GM10248 (cell line): ENCODE measurements at regions of chr17 and their contacts with region 1.

Region 1: GRCh38 chr17:48024937-48025906 is 12.4 kb downstream of the COPZ2 start:
- DNase-seq: peak; percentile 96
- CTCF ChIP-seq: peak; percentile 84

Region 2: GRCh38 chr17:47831934-47832327 is 193.3 kb before region 1 on chr17:
- CTCF ChIA-PET with region 1: no interaction called
- POLR2A ChIA-PET with region 1: no interaction called
- DNase-seq: no peak
- CTCF ChIP-seq: no peak

Region 3: GRCh38 chr17:47949136-47949759 is 76.0 kb before region 1 on chr17:
- CTCF ChIA-PET with region 1: interaction called, 99 read pairs
- POLR2A ChIA-PET with region 1: no interaction called
- DNase-seq: peak; percentile 82
- CTCF ChIP-seq: peak; percentile 88

Region 4: GRCh38 chr17:48047741-48048383 is 22.6 kb after region 1 on chr17 and contains the start of gene NFE2L1:
- CTCF ChIA-PET with region 1: interaction called, 45 read pairs
- POLR2A ChIA-PET with region 1: interaction called, 5 read pairs
- DNase-seq: peak; percentile 97
- CTCF ChIP-seq: no peak

Region 5: GRCh38 chr17:48074315-48075081 is 49.3 kb after region 1 on chr17:
- CTCF ChIA-PET with region 1: interaction called, 195 read pairs
- POLR2A ChIA-PET with region 1: no interaction called
- DNase-seq: peak; percentile 64
- CTCF ChIP-seq: peak; percentile 81

Region 6: GRCh38 chr17:48123111-48123510 is 97.9 kb after region 1 on chr17:
- CTCF ChIA-PET with region 1: interaction called, 11 read pairs
- POLR2A ChIA-PET with region 1: no interaction called
- DNase-seq: no peak
- CTCF ChIP-seq: no peak

Region 7: GRCh38 chr17:48322060-48322459 is 296.8 kb after region 1 on chr17:
- CTCF ChIA-PET with region 1: no interaction called
- POLR2A ChIA-PET with region 1: no interaction called
- DNase-seq: no peak
- CTCF ChIP-seq: no peak

Region 8: DNA sequence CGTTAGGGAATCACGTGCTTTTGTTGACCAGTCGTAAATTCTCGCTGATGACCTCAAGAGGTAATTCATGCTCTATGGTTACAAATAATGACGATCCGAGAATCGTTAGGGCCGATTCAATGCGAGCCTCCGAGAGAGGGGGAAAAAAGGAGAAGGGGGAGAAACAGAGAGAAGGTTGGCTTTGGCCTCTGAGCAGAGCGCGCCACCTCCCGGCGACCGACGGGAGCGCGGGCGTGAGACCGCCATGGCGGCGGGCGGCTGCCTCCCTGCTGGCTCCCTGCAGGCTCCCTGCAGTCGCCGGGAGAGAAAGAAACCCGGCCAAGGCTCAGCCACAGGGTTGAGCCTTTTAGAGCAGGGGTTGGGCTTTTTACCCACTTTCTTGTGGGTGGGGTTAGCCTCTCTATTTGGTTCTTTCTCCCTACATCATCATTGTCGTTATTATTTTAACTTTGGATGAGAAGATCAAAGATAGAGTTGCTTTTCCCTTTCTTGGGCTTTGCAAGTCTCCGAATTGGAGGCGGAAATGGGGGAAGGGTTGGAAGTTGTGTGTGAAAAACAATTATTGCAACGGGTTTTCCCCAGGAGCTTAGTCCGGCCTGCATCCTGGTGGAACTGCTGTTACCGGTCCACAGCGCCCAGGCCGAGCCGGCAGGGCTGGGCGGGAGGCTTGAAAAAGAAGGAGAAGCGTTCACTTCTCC is 568.8 kb after region 1 on chr17:
- CTCF ChIA-PET with region 1: interaction called, 17 read pairs
- POLR2A ChIA-PET with region 1: no interaction called
- DNase-seq: peak; percentile 89
- CTCF ChIP-seq: peak; percentile 92